Activated CD4-positive, alpha-beta T cell treated with anti-CD3 and anti-CD28 coated beads for 36 hours (primary cell): ENCODE measurements at regions of chr9 and their contacts with region 1.

Region 1: DNA sequence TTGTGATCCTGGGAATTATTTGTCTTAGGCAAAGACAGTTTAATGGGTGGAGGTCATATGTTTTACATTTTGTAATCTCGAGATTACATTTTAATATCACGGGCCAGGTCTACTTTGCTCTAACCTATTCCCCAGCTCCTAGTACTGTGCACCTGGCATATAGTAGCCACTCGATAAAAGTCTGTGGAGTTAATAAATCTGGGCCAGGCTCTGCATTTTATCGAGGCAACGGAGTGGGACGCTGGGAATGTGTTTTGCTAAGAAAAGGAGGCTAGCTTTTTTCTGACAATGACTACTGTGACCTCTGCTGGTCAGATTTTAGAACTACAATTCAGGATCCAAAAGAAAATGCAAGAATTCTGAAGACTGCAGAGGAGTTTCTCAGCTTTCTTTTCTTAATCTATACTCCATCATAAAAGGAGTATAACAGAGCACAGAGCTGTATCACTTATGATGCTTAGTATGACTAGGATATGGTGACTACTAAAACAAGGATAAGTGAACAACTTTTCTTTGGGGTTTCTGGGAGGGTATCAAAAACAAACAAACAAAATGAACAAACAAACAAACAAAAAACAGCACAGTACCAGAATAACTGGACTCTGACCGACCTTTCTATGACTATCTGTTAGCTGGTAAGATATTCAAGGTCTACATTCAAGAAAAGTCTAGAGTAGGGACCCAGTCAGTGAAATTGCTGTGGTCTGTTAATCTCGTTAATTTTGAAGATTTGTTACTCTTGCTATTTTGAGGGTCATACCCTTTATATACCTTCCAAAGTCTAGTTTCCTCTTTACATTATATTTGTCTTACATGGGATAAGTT is 46.1 kb upstream of the CER1 start:
- DNase-seq: no peak
- ATAC-seq: no peak
- H3K4me3 Mint-ChIP-seq: no peak overlapping the region
- H3K27ac Mint-ChIP-seq: no peak overlapping the region
- H3K4me1 Mint-ChIP-seq: no peaks in the 10 kb centered on the region
- H3K27me3 Mint-ChIP-seq: peaks cover 27% of the 10 kb centered on the region

Region 2: DNA sequence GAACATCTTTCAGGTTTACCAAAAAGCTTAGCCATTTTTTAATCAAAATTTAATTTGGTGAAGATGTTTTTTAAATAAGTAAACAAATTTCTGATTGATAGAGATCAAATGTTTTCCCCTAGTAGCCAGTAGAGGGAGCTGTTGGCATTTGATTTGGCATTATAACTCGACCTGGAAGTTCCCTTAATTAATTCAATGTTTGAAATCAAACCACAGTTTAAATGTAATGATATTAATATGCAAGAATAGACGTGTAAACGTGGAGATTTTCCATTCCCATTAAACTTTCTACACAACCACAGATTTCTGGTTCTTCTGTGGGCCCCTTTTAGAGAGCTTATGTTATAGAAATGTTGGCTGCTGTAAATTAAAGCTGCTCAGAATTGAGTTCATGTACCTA is 1341.0 kb before region 1 on chr9:
- CTCF ChIA-PET with region 1: interaction called, 3 read pairs
- POLR2A ChIA-PET with region 1: no interaction called
- intact Hi-C with region 1: loop called in 1 of 2 experiments (anchors 2 kb)
- DNase-seq: no peak
- ATAC-seq: no peak
- H3K4me3 Mint-ChIP-seq: no peak overlapping the region
- H3K27ac Mint-ChIP-seq: no peak overlapping the region
- H3K4me1 Mint-ChIP-seq: no peaks in the 10 kb centered on the region
- H3K27me3 Mint-ChIP-seq: no peaks in the 10 kb centered on the region

Region 3: DNA sequence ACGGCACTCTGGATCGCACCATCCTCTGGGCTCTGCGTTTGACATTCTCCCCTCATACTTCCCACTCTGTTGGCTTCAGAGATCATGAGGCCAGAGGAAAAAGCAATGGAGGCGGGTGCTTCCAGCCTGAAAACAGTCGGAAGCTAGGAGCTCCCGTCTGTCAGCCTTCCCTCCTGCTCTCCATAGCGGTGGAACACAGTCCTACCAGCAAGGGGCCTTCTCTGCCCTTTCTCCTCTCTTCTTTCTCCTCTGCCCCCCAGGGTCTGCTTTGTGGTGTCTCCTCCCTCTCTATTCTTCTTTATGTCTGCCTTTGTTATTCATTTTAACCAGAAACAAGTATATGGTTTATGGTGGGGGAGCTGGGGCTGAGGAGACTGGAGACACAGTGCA is 302.2 kb before region 1 on chr9:
- CTCF ChIA-PET with region 1: interaction called, 7 read pairs
- POLR2A ChIA-PET with region 1: no interaction called
- intact Hi-C with region 1: loop called (anchors 2 kb)
- DNase-seq: no peak
- ATAC-seq: no peak
- H3K4me3 Mint-ChIP-seq: no peak overlapping the region
- H3K27ac Mint-ChIP-seq: no peak overlapping the region
- H3K4me1 Mint-ChIP-seq: no peaks in the 10 kb centered on the region
- H3K27me3 Mint-ChIP-seq: peaks cover 3% of the 10 kb centered on the region

Region 4: DNA sequence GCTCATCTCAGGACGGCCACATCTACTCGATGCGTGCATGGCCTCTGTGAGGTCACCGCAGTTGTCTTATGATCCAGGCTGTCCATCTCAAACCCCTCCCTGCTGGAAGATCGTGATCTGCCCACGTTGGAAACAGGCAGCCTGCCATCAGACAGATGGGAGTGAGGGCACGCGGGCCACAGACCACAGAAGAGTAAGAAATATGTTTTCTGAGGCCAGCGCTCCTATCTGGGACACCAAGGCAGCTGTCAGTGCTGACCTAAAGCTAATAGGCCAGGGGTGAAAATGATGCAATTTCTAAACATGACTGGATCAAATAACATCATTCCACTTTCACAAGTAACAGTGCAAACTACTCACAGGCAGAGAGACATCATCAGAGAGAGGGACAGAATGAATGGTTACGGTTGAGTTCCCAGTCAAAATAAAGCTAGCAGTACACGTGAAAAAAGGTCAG is 11.0 kb after region 1 on chr9:
- CTCF ChIA-PET with region 1: interaction called, 11 read pairs
- POLR2A ChIA-PET with region 1: no interaction called
- intact Hi-C with region 1: no loop called
- DNase-seq: no peak
- ATAC-seq: no peak
- H3K4me3 Mint-ChIP-seq: no peak overlapping the region
- H3K27ac Mint-ChIP-seq: no peak overlapping the region
- H3K4me1 Mint-ChIP-seq: no peaks in the 10 kb centered on the region
- H3K27me3 Mint-ChIP-seq: peaks cover 10% of the 10 kb centered on the region